ENCODE measurements at regions of chr5 and their contacts with region 1.

Region 1: DNA sequence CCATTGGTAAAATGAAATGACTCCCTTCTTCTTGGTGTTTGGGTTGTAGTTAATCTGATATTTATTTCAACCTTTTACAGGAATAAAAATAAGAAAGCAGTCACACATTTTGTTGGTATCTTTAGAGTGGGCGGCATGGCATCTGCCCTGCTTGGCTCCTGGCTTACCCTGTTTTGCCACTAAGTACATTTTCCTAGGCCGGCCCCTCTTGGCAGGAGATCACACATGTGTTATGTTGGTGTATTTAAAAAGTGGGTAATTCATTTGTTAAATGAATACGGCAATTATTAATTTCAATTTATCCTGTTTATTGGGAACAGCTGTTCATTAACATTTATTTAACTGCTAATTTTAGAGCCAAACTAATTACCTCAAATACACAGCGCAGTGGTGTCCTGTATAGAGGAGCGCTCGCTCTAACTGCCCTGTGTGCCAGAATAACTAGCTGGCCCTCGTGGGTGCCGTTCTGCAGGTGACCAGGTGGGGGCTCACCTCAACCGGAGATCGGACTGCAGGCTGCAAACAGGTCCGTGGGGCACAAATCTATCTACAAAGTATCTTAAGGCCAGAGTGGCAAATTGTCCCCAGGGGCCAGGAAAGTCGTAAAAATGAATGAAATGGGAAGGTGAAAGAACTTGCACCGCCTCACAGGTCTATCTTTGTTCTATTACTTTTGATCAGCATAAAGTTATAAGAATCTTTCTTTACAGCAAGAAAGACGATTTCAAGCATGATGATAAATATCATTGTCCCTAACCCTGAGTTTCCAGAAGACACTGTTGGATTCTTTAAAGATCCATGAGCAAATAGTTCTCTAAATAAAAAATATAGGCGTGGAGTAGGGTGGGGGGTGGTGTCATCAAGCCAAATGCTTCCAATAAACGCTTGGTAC is 26.2 kb upstream of the GPR151 start:
- DNase-seq: peak; percentile 55 to 90 (median 80)
- ATAC-seq: peak; percentile 90 to 100 (median 98)
- H3K4me3 ChIP-seq: no peak overlapping the region
- H3K27ac ChIP-seq: no peak overlapping the region
- H3K4me1 ChIP-seq: no peaks in the 10 kb centered on the region
- H3K27me3 ChIP-seq: no peaks in the 10 kb centered on the region
- CTCF ChIP-seq: peak; percentile 43 to 88 (median 75)

Region 2: GRCh38 chr5:146959360-146959759 is 417.2 kb after region 1 on chr5:
- intact Hi-C with region 1: loop called in 2 of 3 experiments (anchors 10 kb)
- DNase-seq: no peak
- ATAC-seq: no peak
- H3K4me3 ChIP-seq: no peak overlapping the region
- H3K27ac ChIP-seq: no peak overlapping the region
- H3K4me1 ChIP-seq: no peaks in the 10 kb centered on the region
- H3K27me3 ChIP-seq: peaks cover 0 to 4% (median 1%) of the 10 kb centered on the region in 4 donors
- CTCF ChIP-seq: no peak

Region 3: DNA sequence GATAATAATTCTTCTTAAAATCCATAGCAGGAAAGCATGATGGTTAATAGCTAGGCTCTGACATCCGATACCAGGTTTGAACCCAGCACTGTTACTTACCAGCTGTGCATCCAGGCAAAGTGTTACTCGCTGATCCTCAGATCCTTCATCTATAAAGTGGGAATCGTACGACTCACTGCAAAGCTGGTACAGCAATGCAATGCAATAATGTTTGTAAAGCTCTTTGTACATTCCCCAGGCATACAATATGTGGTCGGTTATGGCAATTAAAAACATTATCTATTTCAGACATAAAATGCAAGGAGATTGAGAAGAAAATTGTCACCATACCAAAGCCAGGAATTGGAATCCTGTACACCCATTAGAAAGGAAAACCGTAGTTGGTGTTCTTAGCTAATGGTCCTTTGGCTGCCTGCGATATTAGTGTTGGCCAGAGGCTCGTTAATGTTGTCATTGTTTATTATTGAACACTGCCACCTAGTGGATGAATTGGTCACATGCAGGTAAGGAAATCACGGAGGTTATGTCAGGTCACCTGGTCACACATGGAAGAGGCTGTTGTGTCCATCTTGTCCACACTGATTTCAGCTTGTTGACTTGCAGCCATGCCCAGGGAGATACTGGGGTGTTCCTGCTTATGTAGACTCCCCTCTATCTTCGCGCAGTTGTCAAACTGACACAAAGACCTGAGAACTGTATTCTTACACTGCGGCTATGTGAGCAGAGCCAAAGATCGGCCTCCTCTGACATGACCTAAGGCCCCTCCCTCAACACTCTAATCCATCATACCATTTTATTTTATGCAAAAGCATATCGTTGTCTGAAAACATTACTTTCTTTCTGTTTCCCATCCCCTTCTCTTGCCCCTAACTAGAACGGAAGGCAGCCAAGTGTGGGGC is 423.8 kb after region 1 on chr5:
- intact Hi-C with region 1: loop called in 1 of 3 experiments (anchors 10 kb)
- DNase-seq: peak in 4 of 6 donors; percentile 21 to 80 (median 54)
- ATAC-seq: peak; percentile 92 to 100 (median 98)
- H3K4me3 ChIP-seq: no peak overlapping the region
- H3K27ac ChIP-seq: no peak overlapping the region
- H3K4me1 ChIP-seq: no peaks in the 10 kb centered on the region
- H3K27me3 ChIP-seq: no peaks in the 10 kb centered on the region
- CTCF ChIP-seq: peak; percentile 86 to 97 (median 86)

Region 4: DNA sequence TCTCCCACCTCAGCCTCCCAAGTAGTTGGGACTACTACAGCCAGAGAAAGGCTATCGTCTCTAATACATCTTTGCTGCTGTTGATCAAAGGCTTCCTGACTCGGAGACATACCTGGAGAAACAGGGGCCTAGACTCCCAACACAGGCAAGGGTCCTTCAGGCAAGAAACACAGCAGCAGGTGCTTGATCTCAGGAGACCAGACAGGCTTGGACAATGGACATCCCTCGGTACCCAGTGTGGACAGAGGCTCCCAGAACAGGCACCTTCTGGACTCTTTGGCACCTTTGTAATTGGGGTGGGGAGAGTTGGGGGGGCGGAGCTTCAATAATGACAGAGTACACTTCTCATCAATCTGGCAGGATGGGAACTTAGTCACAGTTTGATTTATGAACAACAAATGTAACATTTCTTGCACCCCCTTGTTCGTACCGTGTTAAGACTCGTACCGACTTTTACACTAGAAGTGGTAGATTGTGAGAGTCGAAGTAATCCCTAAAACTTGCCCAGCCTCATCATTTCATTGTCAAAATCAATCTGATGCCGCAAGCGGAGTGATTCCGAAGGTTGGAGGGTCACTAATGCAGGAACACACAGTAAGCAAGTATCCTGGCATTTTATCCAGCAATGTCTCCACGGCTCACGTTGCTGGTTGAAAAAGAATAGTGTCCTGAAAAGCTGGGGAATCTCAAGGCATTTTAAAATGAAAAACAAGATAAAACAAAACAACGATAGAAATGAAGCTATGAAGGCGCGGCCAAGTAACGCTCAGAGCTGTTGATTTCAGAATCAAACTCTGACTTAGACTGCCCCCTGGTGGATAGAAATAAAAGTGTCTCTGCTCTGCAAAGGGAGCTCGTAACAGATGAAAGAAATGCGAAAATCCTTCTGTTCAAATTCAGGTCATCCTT is 646.2 kb after region 1 on chr5:
- intact Hi-C with region 1: loop called in 2 of 3 experiments (anchors 5 to 10 kb)
- DNase-seq: peak in 3 of 6 donors; percentile 38 to 61 (median 39)
- ATAC-seq: peak; percentile 68 to 94 (median 89)
- H3K4me3 ChIP-seq: peak overlapping the region in 1 of 4 donors; percentile 28
- H3K27ac ChIP-seq: no peak overlapping the region
- H3K4me1 ChIP-seq: peaks cover 0 to 7% (median 0%) of the 10 kb centered on the region in 3 donors
- H3K27me3 ChIP-seq: no peaks in the 10 kb centered on the region
- CTCF ChIP-seq: peak; percentile 79 to 95 (median 93)

Measured in pancreas (tissue), 10 donors.